Activated CD8-positive, alpha-beta T cell treated with anti-CD3 and anti-CD28 coated beads for 36 hours (primary cell): ENCODE measurements at regions of chr1 and their contacts with region 1.

Region 1: GRCh38 chr1:155063550-155064110 is at the start of gene EFNA4:
- DNase-seq: peak; percentile 88
- ATAC-seq: peak; percentile 80
- H3K4me3 Mint-ChIP-seq: peak within 1 kb of the TSS; percentile 77
- H3K27ac Mint-ChIP-seq: peak within 1 kb of the TSS; percentile 39
- H3K4me1 Mint-ChIP-seq: peaks cover 32% of the 10 kb centered on the region
- H3K27me3 Mint-ChIP-seq: no peaks in the 10 kb centered on the region
- CTCF ChIP-seq: no peak
- total RNA-seq, gene EFNA4: 7.1 to 7.8 TPM

Region 2: DNA sequence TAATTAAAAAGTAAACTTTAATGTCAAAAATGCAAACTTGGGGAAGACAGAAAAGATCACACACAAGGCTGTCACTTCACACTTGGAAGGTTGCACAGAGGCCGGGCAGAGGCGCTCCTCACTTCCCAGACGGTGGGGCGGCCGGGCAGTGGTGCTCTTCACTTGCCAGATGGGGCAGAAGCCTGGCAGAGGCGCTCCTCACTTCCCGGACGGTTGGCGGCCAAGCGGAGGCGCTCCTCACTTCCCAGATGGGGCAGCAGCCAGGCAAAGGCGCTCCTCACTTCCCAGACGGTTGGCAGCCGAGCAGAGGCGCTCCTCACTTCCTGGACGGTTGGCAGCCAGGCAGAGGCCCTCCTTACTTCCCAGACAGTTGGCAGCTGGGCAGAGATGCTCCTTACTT is 684.3 kb before region 1 on chr1:
- CTCF ChIA-PET with region 1: no interaction called
- POLR2A ChIA-PET with region 1: no interaction called
- intact Hi-C with region 1: no loop called
- DNase-seq: no peak
- ATAC-seq: no peak
- H3K4me3 Mint-ChIP-seq: no peak overlapping the region
- H3K27ac Mint-ChIP-seq: no peak overlapping the region
- H3K4me1 Mint-ChIP-seq: peaks cover 7% of the 10 kb centered on the region
- H3K27me3 Mint-ChIP-seq: no peaks in the 10 kb centered on the region
- CTCF ChIP-seq: no peak

Region 3: GRCh38 chr1:155077758-155078445 is 14.3 kb after region 1 on chr1:
- CTCF ChIA-PET with region 1: interaction called, 278 read pairs
- POLR2A ChIA-PET with region 1: interaction called, 11 read pairs
- intact Hi-C with region 1: no loop called
- DNase-seq: no peak
- ATAC-seq: no peak
- H3K4me3 Mint-ChIP-seq: no peak overlapping the region
- H3K27ac Mint-ChIP-seq: no peak overlapping the region
- H3K4me1 Mint-ChIP-seq: peaks cover 32% of the 10 kb centered on the region
- H3K27me3 Mint-ChIP-seq: peaks cover 26% of the 10 kb centered on the region
- CTCF ChIP-seq: no peak